A549 (cell line): ENCODE measurements at regions of chr20 and their contacts with region 1.

Region 1: GRCh38 chr20:23050847-23051631 is 1.6 kb upstream of the THBD start:
- DNase-seq: peak in 1 of 2 experiments; percentile 77
- ATAC-seq: peak; percentile 3 to 34
- H3K4me3 ChIP-seq: peak overlapping the region; percentile 72
- H3K27ac ChIP-seq: peak overlapping the region; percentile 93 to 95
- H3K4me1 ChIP-seq: peaks cover 29% of the 10 kb centered on the region
- CTCF ChIP-seq: peak; percentile 76
- EP300 ChIP-seq: no peak
- POLR2A ChIP-seq: no peak
- RAD21 ChIP-seq: peak; percentile 73 to 74

Region 2: DNA sequence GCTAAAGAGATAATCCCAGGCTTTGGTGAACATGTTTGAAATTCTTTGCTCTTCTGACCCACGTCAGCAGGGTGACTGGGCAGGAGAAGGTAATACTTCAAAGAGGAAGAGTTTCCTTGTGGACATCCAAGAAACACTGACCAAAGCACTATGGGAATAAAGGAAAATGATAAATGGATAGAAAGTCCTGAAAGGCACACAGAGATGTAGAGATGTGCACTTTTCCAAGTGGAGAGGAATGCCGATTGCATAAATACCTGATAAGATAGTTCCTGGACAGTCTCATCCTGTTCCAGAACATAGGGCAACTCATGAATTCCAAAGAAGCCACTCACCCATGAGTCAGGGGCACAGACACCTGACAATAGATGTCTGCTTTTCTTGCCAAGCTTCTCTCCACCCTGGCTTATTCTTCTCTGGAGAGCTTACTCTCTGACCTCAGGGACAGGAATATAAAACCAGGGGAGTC is 275.3 kb before region 1 on chr20:
- CTCF ChIA-PET with region 1: interaction called, 34 read pairs
- POLR2A ChIA-PET with region 1: interaction called, 29 read pairs
- DNase-seq: peak; percentile 86 to 97
- ATAC-seq: peak; percentile 94 to 95
- H3K4me3 ChIP-seq: no peak overlapping the region
- H3K27ac ChIP-seq: peak overlapping the region; percentile 92 to 98
- H3K4me1 ChIP-seq: peaks cover 70% of the 10 kb centered on the region
- CTCF ChIP-seq: no peak
- EP300 ChIP-seq: peak; percentile 99
- POLR2A ChIP-seq: no peak
- RAD21 ChIP-seq: peak; percentile 49 to 85

Region 3: GRCh38 chr20:22901164-22901563 is 149.9 kb before region 1 on chr20:
- CTCF ChIA-PET with region 1: no interaction called
- POLR2A ChIA-PET with region 1: no interaction called
- DNase-seq: no peak
- ATAC-seq: no peak
- H3K4me3 ChIP-seq: no peak overlapping the region
- H3K27ac ChIP-seq: no peak overlapping the region
- H3K4me1 ChIP-seq: no peaks in the 10 kb centered on the region
- CTCF ChIP-seq: no peak
- EP300 ChIP-seq: no peak
- POLR2A ChIP-seq: no peak
- RAD21 ChIP-seq: no peak

Region 4: DNA sequence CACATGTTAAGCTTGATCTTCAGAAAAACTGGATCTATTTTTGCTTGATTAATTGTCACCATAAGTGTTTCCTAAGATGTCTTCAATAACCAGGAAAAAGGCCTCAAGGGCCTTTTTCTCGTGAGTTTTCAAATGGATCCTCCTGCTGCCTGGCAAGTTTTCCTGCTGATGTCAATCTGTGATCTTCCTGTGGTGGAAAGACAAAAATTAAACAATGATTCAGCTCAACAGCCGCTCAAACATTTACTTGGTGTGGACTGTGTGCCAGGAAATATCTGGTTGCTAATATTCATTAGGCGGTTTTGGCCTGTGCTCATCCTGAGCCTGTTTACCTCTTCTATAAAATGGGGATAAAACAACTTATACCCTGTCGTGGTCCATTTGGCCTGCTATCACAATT is 51.3 kb before region 1 on chr20:
- CTCF ChIA-PET with region 1: interaction called, 10 read pairs
- POLR2A ChIA-PET with region 1: interaction called, 4 read pairs
- DNase-seq: peak; percentile 47 to 84
- ATAC-seq: peak; percentile 57 to 87; a peak in 4 of 6 replicates
- H3K4me3 ChIP-seq: no peak overlapping the region
- H3K27ac ChIP-seq: peak overlapping the region; percentile 89
- H3K4me1 ChIP-seq: peaks cover 22% of the 10 kb centered on the region
- CTCF ChIP-seq: no peak
- EP300 ChIP-seq: peak; percentile 63 to 65; a peak in 2 of 5 replicates
- POLR2A ChIP-seq: no peak
- RAD21 ChIP-seq: no peak; a peak in 2 of 5 replicates

Region 5: DNA sequence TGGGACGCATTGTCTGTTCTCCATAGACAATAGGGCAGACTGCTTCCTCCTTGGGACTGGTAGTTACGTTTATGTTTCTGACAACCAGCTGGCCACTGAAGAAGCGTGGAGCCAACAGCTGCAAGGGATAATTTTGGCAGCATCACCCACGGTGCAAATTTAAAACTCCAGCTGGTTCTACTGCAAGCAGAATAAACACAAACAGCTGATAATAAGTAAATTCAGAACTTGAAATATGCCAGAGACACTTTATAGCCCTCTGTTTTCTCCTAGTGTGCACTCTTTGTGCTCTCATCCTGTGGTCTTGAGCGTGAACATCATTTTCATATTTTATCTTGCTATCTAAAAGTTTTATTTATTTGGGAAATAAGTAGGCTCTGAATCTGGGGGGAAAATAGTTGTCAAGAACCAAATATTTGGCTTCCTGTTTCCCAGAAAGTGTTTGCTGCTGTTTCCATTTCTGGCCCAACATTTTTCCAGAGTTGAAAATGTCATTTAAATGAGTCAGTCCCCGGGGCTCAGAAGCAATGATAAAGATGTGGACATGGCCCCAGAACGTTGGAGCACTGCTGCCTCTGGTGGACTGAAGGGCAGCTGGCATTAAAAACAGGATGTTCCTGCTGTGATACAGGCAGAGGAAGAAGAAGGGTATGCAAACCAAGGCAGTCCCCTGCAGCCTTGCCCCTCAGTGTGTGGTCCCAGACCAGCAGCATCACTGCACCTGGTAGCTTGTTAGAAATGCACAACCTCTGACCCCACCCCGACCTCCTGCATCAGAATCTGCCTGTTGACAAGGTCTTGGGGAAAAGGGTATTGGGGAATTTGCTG is 10.9 kb after region 1 on chr20:
- CTCF ChIA-PET with region 1: interaction called, 125 read pairs
- POLR2A ChIA-PET with region 1: interaction called, 4 read pairs
- DNase-seq: peak; percentile 67 to 75
- ATAC-seq: peak; percentile 93 to 98
- H3K4me3 ChIP-seq: no peak overlapping the region
- H3K27ac ChIP-seq: peak overlapping the region; percentile 8 to 37; a peak in 5 of 6 replicates
- H3K4me1 ChIP-seq: peaks cover 18% of the 10 kb centered on the region
- CTCF ChIP-seq: peak; percentile 43; the same call in 2 of the 3 replicates
- EP300 ChIP-seq: no peak
- POLR2A ChIP-seq: no peak
- RAD21 ChIP-seq: peak; percentile 71 to 82

Region 6: DNA sequence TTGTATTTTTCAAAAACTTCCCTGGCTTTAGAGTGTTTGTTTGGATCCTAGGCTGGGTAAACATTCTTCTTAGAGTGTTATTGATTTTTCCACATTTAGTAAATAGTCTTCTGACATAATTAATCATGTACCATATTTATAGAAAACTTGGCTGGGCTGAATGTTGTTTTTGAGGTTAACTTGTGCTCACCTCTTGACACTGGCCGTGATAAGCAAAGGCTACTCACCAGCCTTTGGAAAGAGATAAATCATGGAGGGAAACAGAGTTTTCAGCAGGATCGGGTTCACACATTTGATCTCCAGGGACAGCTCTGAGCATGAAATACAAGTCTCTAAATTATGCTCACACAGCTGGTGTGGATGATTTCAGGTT is 41.3 kb after region 1 on chr20:
- CTCF ChIA-PET with region 1: no interaction called
- POLR2A ChIA-PET with region 1: no interaction called
- DNase-seq: no peak
- ATAC-seq: no peak
- H3K4me3 ChIP-seq: no peak overlapping the region
- H3K27ac ChIP-seq: no peak overlapping the region
- H3K4me1 ChIP-seq: no peaks in the 10 kb centered on the region
- CTCF ChIP-seq: no peak
- EP300 ChIP-seq: no peak
- POLR2A ChIP-seq: no peak
- RAD21 ChIP-seq: no peak

Region 7: DNA sequence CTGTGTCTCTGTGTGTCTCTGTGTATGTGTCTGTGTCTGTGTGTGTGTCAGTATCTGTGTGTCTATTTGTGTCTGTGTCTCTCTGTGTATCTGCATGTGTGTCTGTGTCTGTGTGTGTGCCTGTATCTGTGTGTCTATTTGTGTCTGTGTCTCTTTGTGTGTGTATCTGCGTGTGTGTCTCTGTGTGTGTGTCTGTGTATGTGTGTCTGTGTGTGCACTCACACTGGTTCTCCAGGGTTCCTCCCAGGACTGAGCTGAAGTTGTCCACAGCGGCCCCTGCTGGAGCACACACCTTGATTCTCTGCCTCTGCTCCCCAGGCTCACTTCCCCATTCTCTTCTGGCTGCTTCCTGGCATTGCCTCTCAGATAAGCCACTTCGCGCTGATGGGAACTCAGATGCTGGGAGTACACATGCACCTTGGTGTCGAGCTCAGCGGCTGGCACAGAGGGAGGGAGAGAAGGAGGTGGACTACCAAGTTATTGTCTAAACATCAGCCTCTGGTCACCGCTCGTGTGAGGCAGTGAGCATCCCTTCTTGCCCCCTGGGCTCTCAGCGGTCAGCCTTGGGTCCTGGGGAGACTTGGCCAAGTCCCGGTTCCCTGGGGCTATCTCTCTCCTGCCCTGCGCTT is 194.6 kb after region 1 on chr20:
- CTCF ChIA-PET with region 1: interaction called, 15 read pairs
- POLR2A ChIA-PET with region 1: no interaction called
- DNase-seq: peak; percentile 65 to 75
- ATAC-seq: peak; percentile 93 to 98
- H3K4me3 ChIP-seq: no peak overlapping the region
- H3K27ac ChIP-seq: peak overlapping the region in 1 of 2 experiments; percentile 34; a peak in 1 of 6 replicates
- H3K4me1 ChIP-seq: no peaks in the 10 kb centered on the region
- CTCF ChIP-seq: peak; percentile 71
- EP300 ChIP-seq: no peak
- POLR2A ChIP-seq: no peak
- RAD21 ChIP-seq: peak; percentile 63 to 64

Region 8: GRCh38 chr20:23350196-23350903 is 299.3 kb after region 1 on chr20 and contains the start of gene NXT1:
- CTCF ChIA-PET with region 1: interaction called, 156 read pairs
- POLR2A ChIA-PET with region 1: interaction called, 24 read pairs
- DNase-seq: peak; percentile 95 to 99
- ATAC-seq: peak; percentile 86 to 93
- H3K4me3 ChIP-seq: peak within 1 kb of the TSS; percentile 81
- H3K27ac ChIP-seq: peak within 1 kb of the TSS; percentile 94 to 95
- H3K4me1 ChIP-seq: peaks cover 21% of the 10 kb centered on the region
- CTCF ChIP-seq: no peak
- EP300 ChIP-seq: no peak; a peak in 1 of 5 replicates
- POLR2A ChIP-seq: peak; percentile 79
- RAD21 ChIP-seq: no peak
- polyA plus RNA-seq, gene NXT1: 68.2 and 71.8 TPM in 2 replicates